Left colon (tissue), 2 donors: ENCODE measurements at regions of chr3 and their contacts with region 1.

Region 1: GRCh38 chr3:152268555-152269425 is at the start of gene MBNL1:
- DNase-seq: peak; percentile 86
- ATAC-seq: peak; percentile 73
- total RNA-seq, gene MBNL1: 154 to 183 TPM

Region 2: DNA sequence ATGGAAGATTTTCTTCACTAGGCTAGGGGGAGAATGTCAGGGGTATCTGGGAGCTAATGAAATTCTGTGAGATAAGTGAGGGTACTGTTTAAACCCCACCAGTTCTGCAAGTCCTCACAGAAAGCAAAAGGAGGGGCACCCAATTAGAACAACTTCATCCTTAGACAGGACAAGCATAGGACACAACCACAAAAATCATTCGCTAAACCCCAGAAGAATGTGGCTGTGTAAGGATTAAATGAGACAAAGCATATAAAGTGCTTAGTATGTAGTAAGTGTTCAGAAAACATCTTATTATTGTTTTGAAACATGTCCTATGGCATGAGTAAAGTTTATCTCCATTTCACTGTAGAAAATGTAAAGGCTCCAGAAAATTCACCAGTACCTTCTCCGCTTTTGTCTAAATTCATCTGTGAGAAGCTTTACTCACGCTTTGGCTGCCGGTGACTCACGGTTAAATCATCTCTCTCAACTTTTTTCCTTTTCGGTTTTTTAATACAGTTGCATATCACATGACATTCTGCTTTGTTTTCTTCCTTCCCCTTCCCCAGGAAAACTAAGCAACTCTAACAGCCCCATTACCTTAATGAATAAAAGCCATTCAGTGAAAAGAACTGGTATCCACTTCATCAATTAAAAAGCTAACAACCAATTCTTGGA is 1298.0 kb before region 1 on chr3:
- intact Hi-C with region 1: no loop called
- DNase-seq: no peak
- ATAC-seq: no peak

Region 3: DNA sequence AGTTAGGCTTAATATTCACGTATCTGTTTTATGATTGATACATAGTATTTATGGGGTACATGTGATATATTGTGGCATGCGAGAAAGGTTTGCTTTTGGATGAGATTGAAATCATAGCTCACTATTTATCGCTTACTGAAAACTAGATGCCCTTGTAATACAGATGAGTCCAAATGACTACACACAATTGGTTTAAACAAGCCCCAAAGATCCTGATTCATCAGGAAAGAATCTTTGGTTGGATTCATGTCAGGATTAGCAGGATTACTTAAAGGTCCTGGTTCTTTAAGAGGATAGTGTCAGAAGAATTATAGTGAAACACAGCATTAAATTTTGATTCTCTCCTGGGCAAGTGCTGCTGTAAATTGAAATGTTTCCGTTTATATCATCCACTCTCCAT is 473.5 kb before region 1 on chr3:
- intact Hi-C with region 1: no loop called
- DNase-seq: no peak
- ATAC-seq: no peak

Region 4: DNA sequence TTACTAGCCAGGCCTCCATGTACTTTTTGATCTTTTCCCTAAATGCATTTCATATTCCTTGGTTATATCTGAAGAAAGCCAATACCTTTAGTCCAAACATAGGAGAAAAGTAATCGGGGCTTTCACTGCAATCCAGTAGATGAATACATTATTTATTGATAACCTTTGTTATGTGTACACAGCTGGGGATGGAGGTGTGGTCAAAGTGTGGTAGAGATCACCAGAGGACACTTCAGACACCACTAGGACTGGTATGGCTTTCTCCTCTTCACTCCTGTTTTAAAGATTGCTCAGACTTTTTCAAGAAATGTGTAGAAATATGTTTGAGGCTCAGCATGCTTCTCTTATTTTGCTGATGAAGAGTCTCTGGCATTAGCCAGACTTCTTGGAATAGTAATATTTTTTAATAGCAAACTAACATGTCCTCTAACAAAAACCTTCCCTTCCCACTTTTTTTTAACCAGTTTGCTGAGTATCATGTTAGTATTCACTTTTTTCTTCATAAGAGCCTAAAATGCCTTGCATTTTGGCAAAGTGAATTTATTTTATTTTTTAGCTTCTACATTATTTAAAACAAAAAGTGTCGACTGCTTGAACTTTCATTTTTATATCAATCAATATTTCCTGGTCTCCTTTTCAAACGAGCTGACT is 65.7 kb before region 1 on chr3:
- intact Hi-C with region 1: loop called in 1 of 2 experiments (anchors 5 kb)
- DNase-seq: peak; percentile 29 to 42
- ATAC-seq: peak; percentile 94

Region 5: DNA sequence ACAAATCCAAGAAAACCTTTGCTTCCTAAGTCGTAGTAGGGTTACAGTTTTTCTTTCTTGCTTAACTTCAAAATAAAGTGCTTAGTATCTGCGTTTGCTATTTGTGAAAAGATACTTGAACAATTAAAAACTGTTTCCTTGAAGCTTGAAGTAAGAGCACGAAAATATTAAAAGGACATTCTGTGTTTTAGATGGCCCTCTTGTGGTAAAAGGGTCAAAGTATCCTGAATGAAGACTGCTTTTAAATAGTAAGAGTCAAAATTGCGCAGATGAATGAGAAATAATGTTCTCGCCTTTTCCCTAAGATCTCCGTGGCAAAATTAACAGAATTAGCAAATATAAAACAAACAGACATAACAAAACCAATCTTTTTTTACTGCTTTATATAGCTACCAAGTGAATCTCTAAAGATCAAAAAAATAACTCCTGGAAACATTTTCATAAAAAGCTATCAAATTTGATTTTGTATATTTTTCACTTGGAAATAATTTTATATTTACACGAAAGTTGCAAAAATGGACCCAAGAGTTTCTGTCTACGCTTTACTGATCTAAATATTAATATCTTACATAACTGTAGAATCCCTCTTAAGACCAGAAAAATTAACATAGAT is 175.3 kb after region 1 on chr3:
- intact Hi-C with region 1: loop called in 1 of 2 experiments (anchors 10 kb)
- DNase-seq: no peak
- ATAC-seq: peak; percentile 69